ENCODE measurements at regions of chr19 and their contacts with region 1.

Region 1: DNA sequence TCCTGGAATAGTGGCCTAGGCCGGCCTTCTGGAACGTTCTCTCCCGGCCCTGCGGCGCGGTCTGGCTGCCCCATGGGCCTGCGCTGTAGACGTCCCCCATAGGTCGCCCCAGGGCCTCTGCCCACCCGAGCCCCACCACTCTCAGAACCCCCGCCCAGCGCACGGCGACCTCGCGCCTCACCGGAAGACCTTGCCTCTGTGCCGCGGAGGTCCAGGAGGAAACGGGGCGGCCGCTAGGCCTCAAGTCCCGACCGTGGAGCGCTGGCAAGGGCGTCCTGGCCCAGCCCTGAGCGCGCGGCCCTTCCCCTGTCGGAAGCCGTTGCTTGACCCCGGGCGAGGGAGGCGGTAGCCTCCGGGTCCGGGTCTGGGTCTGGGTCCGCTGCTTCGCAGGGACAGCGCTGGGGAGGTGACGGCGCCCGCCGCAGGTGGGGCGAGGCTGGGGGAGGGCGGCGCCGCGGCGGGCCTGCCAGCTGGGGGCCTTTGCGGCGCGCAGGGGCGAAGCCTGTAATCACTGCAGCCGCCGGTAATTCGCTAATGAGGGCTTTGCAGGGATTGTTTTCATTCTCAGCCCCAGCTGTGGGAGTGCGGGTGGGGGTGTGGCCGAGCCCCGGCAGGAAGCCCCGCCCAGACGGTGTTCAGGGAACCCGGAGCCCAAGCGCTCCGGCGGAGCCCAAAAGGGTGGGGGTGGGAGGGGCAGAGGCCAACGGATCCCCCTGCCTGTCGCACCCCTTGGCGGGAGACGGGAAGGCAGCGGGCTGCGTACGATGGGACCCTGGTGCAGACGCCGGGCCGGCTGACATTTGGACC is 8.6 kb downstream of the C19orf25 start:
- DNase-seq: peak; percentile 80
- H3K4me3 Mint-ChIP-seq: peak overlapping the region; percentile 55
- H3K27ac Mint-ChIP-seq: no peak overlapping the region
- H3K4me1 Mint-ChIP-seq: peaks cover 13% of the 10 kb centered on the region
- H3K27me3 Mint-ChIP-seq: peaks cover 11% of the 10 kb centered on the region

Region 2: DNA sequence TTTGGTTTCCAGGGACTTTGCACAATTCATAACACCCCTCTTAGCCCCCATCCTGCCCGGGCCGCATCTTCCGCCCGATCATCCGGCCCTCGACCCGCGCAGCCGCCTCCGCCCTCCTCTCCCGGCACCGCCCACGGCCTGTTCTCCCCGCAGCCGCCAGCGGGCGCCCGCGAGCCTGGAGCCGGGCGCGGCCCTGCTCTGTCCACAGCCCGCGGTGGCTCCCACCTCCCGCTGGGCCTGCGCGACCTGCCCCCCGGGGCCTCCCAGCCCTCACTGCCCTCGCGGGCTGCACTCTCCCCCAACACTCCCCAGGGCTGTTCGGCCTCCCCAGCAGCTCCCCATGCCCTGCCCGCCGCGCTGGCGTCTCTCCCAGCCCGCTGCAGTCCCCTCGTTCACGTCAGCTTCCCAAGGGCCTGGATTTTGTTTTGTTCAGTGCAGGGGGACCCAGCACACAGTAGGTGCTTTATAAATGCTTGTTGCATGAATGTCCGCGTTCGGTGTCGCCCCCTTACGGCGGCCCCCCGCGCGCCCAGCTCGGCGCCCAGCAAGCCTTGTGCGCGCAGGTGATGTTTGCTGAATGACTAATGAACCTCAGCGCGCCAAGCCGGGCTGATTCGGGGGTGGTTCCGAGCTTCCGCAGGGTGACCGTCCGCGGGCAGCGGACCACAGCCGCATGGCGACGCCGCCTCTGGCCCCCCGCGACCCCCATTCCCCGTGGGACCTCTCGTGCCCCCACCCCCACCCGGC is 25.0 kb before region 1 on chr19:
- CTCF ChIA-PET with region 1: interaction called, 10 read pairs
- POLR2A ChIA-PET with region 1: interaction called, 5 read pairs
- DNase-seq: peak; percentile 84
- H3K4me3 Mint-ChIP-seq: peak overlapping the region; percentile 70
- H3K27ac Mint-ChIP-seq: peak overlapping the region; percentile 27
- H3K4me1 Mint-ChIP-seq: peaks cover 44% of the 10 kb centered on the region
- H3K27me3 Mint-ChIP-seq: peaks cover 29% of the 10 kb centered on the region

Measured in activated CD4-positive, alpha-beta memory T cell treated with anti-CD3 and anti-CD28 coated beads, Interleukin-2, amount 10 ng/mL, durations not matched to agents 7 days and 5 days (primary cell).